BJ (cell line): ENCODE measurements at regions of chr13 and their contacts with region 1.

Region 1: DNA sequence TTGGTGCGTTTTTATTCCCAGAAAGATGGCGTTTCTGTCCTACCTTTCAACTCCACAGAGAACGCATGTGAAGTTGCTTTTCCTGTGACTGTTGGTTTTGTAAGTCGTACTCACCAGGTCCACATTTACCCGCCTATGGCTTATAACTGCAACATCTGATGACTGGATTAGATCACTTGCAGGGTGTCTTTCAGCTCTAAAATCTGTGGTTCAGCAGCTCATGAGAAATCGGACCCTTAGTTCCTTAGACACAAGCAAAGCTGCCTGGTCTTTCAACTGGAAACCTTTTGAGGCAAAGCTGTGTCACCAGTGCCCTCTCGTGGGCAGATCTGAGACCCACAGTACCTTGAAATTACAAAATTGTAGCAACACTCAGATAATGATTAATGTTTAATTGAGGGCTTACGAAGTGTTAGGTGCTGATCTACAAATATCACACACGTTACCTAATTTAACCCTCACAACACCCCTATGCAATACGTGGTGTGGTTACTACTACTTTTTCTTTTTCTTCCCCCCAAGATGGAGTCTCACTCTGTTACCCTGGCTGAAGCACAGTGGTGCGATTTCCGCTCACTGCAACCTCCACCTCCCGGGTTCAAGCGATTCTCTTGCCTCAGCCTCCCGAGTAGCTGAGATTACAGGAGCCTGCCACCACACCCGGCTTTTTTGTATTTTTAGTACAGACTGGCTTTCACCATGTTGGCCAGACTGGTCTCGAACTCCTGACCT is 65.4 kb downstream of the RUBCNL start:
- DNase-seq: no peak
- H3K4me3 ChIP-seq: no peak overlapping the region
- H3K27me3 ChIP-seq: no peaks in the 10 kb centered on the region
- CTCF ChIP-seq: peak; percentile 85

Region 2: DNA sequence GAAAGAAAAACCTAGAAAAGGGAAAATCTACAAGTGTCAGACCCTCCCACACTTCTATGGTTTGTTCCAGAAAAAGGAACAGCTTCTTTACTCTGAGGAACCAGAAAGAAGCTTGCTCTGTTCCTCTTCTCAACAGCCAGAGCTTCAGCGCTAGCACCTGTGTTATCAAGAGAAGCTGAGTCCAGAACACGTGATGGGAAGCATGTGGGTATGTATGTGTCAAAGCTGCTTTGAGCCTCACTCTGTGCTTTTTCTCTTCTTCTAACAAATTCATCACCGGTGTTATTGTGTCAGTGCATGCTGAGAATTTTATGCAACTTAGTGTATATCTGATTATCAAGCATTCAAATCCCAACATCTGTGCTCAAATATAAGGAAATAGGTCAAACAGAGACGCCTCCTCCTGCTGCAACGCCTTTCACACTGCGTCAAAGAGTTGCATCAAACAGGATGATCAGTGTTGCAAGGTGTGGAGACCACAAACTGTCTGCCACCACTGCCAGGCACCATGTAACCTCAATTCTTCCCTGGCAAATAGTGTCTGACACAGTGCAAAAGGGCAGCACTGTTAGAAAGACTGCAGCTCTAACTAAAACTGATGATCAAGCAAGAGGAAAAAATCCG is 26.1 kb before region 1 on chr13:
- CTCF ChIA-PET with region 1: interaction called, 16 read pairs
- POLR2A ChIA-PET with region 1: no interaction called
- DNase-seq: no peak
- H3K4me3 ChIP-seq: no peak overlapping the region
- H3K27me3 ChIP-seq: no peaks in the 10 kb centered on the region
- CTCF ChIP-seq: no peak

Region 3: GRCh38 chr13:46332772-46333171 is 11.1 kb after region 1 on chr13:
- CTCF ChIA-PET with region 1: interaction called, 10 read pairs
- POLR2A ChIA-PET with region 1: no interaction called
- DNase-seq: no peak
- H3K4me3 ChIP-seq: no peak overlapping the region
- H3K27me3 ChIP-seq: no peaks in the 10 kb centered on the region; the same call in 1 of the 2 replicates
- CTCF ChIP-seq: no peak

Region 4: GRCh38 chr13:46728777-46729176 is 407.1 kb after region 1 on chr13:
- CTCF ChIA-PET with region 1: no interaction called
- POLR2A ChIA-PET with region 1: no interaction called
- DNase-seq: no peak
- H3K4me3 ChIP-seq: no peak overlapping the region
- H3K27me3 ChIP-seq: no peaks in the 10 kb centered on the region
- CTCF ChIP-seq: no peak